BJ (cell line): ENCODE measurements at regions of chr1 and their contacts with region 1.

Region 1: GRCh38 chr1:201904579-201904978 is 15.9 kb downstream of the SHISA4 start:
- DNase-seq: peak; percentile 73
- H3K4me3 ChIP-seq: no peak overlapping the region
- H3K27me3 ChIP-seq: no peaks in the 10 kb centered on the region
- CTCF ChIP-seq: no peak

Region 2: GRCh38 chr1:201795066-201795465 is 109.5 kb before region 1 on chr1:
- CTCF ChIA-PET with region 1: no interaction called
- POLR2A ChIA-PET with region 1: no interaction called
- DNase-seq: no peak
- H3K4me3 ChIP-seq: no peak overlapping the region
- H3K27me3 ChIP-seq: no peaks in the 10 kb centered on the region
- CTCF ChIP-seq: peak; percentile 43

Region 3: DNA sequence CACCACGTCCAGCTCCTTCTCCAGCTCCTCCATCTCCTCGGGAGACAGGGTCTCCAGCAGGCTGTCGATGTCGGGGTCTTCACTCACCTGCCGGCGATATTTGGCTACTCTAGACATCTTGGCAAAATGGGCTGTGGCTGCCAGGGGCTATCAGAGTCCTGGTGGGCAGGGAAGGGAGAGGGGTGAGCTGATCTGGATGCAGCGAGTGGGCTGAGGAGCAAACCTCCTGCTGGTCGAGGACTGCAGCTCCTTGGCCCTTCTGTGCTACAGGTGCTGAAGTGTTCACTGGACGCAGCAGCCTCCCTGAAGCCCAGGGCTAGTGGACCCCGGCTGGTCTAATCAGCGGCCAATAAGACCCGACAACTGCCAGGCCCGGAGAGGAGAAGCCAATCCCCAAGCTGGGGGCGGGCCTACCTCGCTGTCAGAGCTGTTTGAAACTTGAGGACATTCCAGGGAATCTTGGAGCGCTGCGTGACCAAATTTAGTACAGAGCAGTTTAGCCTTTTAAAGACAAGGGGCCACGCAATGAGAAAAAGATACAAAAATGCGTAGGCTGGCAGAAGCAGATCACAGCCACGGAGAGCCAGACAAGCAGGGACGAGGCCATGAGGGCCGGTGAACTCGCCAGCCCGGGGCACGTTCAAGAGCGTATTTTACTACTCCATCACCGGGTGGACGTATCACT is 41.8 kb after region 1 on chr1 and contains the start of gene LMOD1:
- CTCF ChIA-PET with region 1: interaction called, 26 read pairs
- POLR2A ChIA-PET with region 1: interaction called, 18 read pairs
- DNase-seq: peak; percentile 86
- H3K4me3 ChIP-seq: peak within 1 kb of the TSS; percentile 49
- H3K27me3 ChIP-seq: no peaks in the 10 kb centered on the region
- CTCF ChIP-seq: 0 out of 2 replicates have a peak, but pooled peaks have one; percentile 11
- polyA plus RNA-seq, gene LMOD1: 67.8 and 112 TPM in 2 replicates